Activated CD8-positive, alpha-beta T cell treated with anti-CD3 and anti-CD28 coated beads, Interleukin-2, amount 10 ng/mL, durations not matched to agents 7 days and 5 days (primary cell): ENCODE measurements at regions of chr17 and their contacts with region 1.

Region 1: DNA sequence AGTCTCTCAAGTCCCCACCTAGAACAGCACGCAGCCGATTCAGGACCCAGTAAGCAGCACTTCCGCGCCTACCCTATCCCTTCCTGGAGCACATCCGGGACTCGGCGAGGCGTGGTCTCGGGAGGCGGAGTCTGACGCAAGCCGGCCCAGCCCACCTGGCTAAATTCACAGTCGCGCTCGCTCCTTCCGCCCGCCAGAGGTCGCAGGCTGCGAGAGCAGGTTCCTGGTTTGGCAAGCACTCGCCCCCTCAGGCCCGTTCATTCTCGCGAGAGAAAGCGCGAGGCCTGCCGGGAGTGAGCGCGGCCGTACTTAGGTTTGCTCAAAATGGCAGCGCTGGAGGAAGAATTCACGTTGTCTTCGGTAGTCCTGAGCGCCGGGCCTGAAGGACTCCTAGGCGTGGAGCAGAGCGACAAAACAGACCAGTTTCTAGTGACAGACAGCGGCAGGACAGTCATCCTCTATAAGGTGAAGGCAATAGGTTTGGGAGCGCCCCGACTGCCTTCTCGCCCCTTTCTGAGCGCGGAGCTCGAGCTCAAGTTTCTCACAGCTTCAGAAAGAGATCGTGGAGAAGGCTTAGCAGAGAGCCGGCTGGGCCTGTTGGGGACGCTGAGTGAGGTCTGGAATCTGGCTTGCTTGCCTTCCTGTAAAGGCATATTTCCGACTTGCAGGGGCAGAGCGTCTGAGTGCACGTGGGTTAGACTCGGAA is at the start of gene NOL11:
- DNase-seq: peak; percentile 99
- ATAC-seq: peak; percentile 97
- H3K4me3 Mint-ChIP-seq: peak within 1 kb of the TSS; percentile 96
- H3K27ac Mint-ChIP-seq: peak within 1 kb of the TSS; percentile 97
- H3K4me1 Mint-ChIP-seq: peaks cover 39% of the 10 kb centered on the region
- H3K27me3 Mint-ChIP-seq: no peaks in the 10 kb centered on the region
- total RNA-seq, gene NOL11: 54.0 to 55.6 TPM

Region 2: GRCh38 chr17:67366193-67367157 is 351.3 kb before region 1 on chr17 and contains the start of gene PSMD12:
- CTCF ChIA-PET with region 1: interaction called, 4 read pairs
- POLR2A ChIA-PET with region 1: interaction called, 11 read pairs
- DNase-seq: peak; percentile 95
- ATAC-seq: peak; percentile 94
- H3K4me3 Mint-ChIP-seq: peak within 1 kb of the TSS; percentile 89
- H3K27ac Mint-ChIP-seq: peak within 1 kb of the TSS; percentile 90
- H3K4me1 Mint-ChIP-seq: peaks cover 50% of the 10 kb centered on the region
- H3K27me3 Mint-ChIP-seq: no peaks in the 10 kb centered on the region
- total RNA-seq, gene PSMD12: 49.4 to 53.9 TPM

Region 3: DNA sequence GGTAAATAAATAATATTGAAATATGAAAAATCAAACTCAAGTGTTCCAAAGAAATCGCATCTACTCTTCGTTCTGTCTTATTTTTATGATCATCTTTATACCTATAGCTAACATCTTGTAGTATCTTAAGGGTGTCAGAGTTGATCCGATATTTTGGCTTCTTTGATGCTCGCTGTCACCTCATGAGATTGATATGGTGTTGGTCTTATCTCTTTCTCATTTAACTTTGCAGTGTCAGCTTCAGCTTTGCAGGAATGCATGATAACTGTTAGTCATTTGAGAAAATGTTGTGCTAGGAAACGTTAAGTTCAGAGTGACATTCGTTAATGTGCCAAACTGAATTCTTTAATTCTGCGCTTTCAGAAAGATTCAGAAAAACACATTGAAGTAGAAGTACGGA is 19.4 kb after region 1 on chr17:
- CTCF ChIA-PET with region 1: interaction called, 13 read pairs
- POLR2A ChIA-PET with region 1: interaction called, 9 read pairs
- DNase-seq: no peak
- ATAC-seq: no peak
- H3K4me3 Mint-ChIP-seq: no peak overlapping the region
- H3K27ac Mint-ChIP-seq: no peak overlapping the region
- H3K4me1 Mint-ChIP-seq: peaks cover 11% of the 10 kb centered on the region
- H3K27me3 Mint-ChIP-seq: no peaks in the 10 kb centered on the region

Region 4: GRCh38 chr17:67813803-67814180 is 96.0 kb after region 1 on chr17:
- CTCF ChIA-PET with region 1: no interaction called
- POLR2A ChIA-PET with region 1: no interaction called
- DNase-seq: no peak
- ATAC-seq: no peak
- H3K4me3 Mint-ChIP-seq: no peak overlapping the region
- H3K27ac Mint-ChIP-seq: no peak overlapping the region
- H3K4me1 Mint-ChIP-seq: no peaks in the 10 kb centered on the region
- H3K27me3 Mint-ChIP-seq: peaks cover 10% of the 10 kb centered on the region

Region 5: DNA sequence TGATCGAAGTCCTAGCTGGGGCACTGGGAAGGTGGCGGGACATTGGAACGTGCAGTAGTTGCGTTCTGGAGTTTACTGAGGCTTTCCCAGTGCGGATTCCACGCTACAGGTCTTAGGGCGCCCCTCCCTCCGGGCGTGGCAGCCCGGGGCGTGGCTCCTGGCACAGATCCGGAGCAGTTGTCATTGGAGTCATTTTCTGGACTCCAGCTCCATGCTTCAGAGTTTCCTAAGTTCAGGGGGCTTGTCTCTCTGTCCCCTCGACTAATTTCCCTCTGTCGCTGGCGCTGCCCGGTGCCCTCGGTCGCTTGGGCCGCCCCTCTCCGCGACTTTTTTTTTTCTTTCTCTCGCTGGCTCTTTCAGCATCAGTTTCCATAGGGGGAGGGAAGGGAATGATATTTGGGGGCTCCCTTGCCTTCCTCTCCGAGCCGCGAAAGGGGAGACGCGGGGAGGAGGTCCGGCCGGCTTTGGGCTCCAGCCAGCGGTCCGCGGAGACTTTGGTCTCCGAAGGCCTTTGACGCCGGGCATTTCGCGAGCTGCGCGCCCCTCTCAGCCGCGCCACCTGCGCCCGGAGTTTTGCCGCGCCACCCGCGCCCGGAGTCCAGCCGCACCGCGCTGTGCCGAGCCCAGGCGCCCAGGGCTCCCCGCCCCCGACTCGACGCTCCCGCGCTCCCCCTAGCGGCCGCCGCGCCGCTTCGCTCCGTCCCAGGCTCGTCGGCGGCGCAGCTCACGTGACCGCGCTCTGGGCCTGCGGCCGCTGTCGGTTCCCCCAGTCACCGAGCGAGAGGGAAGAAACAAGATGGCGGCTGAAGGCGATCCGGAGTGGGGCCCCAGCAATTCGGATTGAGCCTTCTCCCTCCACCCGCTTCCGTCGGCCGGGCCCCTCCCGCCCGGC is 107.2 kb after region 1 on chr17 and contains the start of gene BPTF:
- CTCF ChIA-PET with region 1: interaction called, 6 read pairs
- POLR2A ChIA-PET with region 1: interaction called, 11 read pairs
- DNase-seq: peak; percentile 95
- ATAC-seq: peak; percentile 89
- H3K4me3 Mint-ChIP-seq: peak within 1 kb of the TSS; percentile 93
- H3K27ac Mint-ChIP-seq: peak within 1 kb of the TSS; percentile 99
- H3K4me1 Mint-ChIP-seq: peaks cover 26% of the 10 kb centered on the region
- H3K27me3 Mint-ChIP-seq: peaks cover 13% of the 10 kb centered on the region
- total RNA-seq, gene BPTF: 85.9 to 87.0 TPM